ENCODE measurements at regions of chr9 and their contacts with region 1.

Region 1: DNA sequence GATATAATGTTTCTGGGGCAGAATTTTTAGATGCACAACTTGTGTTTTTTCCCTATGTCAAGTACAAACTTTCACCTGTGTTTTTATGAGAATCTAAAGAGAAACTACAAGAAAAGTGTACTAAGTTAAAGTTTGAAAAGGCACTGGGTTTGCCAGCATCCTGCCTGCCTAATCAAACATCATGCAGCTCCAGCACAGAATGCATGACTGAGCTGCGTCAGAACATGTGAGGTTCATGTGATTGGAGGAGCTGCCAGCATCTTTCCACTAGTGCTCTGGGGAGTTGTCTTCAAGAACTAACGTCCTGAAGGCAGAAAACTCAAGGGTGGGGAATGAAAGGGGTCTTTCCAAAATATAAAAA is 46.1 kb upstream of the RIC1 start:
- DNase-seq: peak; percentile 65 to 81
- H3K4me3 ChIP-seq: no peak overlapping the region
- H3K27ac ChIP-seq: peak overlapping the region; percentile 59 to 64
- H3K4me1 ChIP-seq: peaks cover 0 to 21% (median 4%) of the 10 kb centered on the region in 4 donors
- H3K27me3 ChIP-seq: no peaks in the 10 kb centered on the region
- CTCF ChIP-seq: no peak

Region 2: DNA sequence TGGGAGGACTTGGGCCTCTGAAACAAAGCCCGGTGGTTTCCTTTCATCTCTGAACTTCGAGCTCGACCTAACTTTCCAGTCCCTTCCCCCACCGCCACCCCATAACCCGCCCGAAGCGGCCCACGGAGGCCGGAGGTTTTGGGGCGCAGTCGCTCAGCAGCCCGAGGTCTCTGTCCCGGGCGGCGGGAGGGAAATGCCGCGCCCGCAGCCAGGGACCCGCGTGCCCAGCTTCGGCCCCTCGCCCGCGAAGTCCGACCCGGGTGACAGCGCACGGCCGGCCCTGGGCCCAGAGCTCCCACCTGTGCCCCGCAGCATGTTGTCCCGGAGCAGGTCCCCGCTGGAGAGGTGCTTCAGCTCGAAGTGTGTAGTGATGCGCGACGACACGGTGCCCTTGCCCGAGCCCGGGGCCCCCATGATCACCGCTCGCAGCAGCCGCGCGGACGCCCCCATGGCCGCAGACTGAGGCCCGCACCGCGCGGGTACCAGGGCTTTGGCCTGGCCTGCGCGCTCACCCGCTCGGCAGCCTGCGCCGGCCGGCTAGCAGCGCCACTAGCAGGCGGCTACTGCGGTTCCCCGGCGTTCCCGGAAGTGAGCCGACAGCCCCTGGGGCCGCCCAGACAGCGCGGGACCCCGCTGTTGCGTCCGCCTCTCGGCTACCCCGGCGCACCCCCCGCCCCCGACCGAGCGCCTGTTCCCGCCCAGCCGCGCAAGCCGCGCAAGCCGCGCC is 842.0 kb before region 1 on chr9 and contains the start of gene AK3:
- intact Hi-C with region 1: loop called (anchors 10 kb)
- DNase-seq: peak; percentile 85 to 91
- H3K4me3 ChIP-seq: peak within 1 kb of the TSS; percentile 94 to 95
- H3K27ac ChIP-seq: peak within 1 kb of the TSS; percentile 85 to 95
- H3K4me1 ChIP-seq: peaks cover 0 to 16% (median 12%) of the 10 kb centered on the region in 4 donors
- H3K27me3 ChIP-seq: no peaks in the 10 kb centered on the region
- CTCF ChIP-seq: peak; percentile 10 to 32

Measured in tibial artery (tissue), 4 donors.